B cell (primary cell): ENCODE measurements at regions of chr13 and their contacts with region 1.

Region 1: GRCh38 chr13:99442273-99442895 is 58.9 kb upstream of the TM9SF2 start:
- DNase-seq: peak; percentile 76
- ATAC-seq: peak; percentile 80
- H3K4me3 ChIP-seq: no peak overlapping the region
- H3K4me3 Mint-ChIP-seq: no peak overlapping the region
- H3K27ac ChIP-seq: no peak overlapping the region
- H3K27ac Mint-ChIP-seq: no peak overlapping the region
- H3K4me1 ChIP-seq: peaks cover 14 to 17% of the 10 kb centered on the region in 2 donors
- H3K4me1 Mint-ChIP-seq: peaks cover 15% of the 10 kb centered on the region
- H3K27me3 ChIP-seq: no peaks in the 10 kb centered on the region
- H3K27me3 Mint-ChIP-seq: no peaks in the 10 kb centered on the region
- CTCF ChIP-seq: peak; percentile 99

Region 2: DNA sequence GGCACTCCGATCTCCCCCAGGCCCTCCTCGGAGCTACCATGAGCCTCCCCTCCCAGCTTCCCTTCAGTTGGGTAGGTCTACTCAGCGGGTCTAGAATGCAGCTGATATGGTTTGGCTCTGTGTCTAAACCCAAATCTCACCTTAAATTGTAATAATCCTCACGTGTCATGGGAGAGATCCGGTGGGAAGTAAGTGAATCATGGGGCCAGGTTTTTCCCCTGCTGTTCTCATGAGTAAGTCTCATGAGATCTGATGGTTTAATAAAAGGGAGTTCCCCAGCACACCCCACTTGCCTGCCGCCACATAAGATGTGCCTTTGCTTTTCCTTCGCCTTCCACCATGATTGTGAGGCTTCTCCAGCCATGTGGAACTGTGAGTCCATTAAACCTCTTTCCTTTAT is 450.0 kb before region 1 on chr13:
- CTCF ChIA-PET with region 1: no interaction called
- POLR2A ChIA-PET with region 1: no interaction called
- intact Hi-C with region 1: no loop called
- DNase-seq: no peak
- ATAC-seq: no peak
- H3K4me3 ChIP-seq: no peak overlapping the region
- H3K4me3 Mint-ChIP-seq: no peak overlapping the region
- H3K27ac ChIP-seq: no peak overlapping the region
- H3K27ac Mint-ChIP-seq: no peak overlapping the region
- H3K4me1 ChIP-seq: no peaks in the 10 kb centered on the region
- H3K4me1 Mint-ChIP-seq: no peaks in the 10 kb centered on the region
- H3K27me3 ChIP-seq: no peaks in the 10 kb centered on the region
- H3K27me3 Mint-ChIP-seq: no peaks in the 10 kb centered on the region
- CTCF ChIP-seq: no peak

Region 3: DNA sequence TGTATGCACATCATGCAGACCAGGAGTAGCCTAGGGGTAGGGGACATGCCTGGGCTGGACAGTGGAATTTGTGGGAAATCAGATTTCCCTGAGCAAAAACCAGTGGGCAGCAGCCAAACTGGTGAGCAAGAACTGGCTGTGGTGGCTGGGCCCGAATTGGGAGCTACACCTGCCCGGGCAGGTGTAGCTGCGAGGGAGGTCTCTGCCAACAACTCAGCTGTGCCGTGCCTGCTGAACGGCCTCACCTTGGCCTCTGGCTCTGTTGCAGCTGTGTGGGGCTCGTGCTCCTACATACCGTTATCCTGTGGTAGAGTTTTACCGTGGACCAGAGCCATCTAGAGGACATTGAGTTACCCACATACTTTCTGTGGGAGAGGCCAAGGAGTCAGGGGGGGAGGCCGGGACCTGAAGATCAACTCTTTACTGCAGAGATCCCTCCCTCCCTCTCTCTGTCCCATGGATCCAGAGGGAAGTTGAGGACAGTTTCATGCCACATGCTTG is 172.1 kb after region 1 on chr13:
- CTCF ChIA-PET with region 1: interaction called, 9 read pairs
- POLR2A ChIA-PET with region 1: no interaction called
- intact Hi-C with region 1: loop called (anchors 1 kb)
- DNase-seq: peak; percentile 62
- ATAC-seq: peak; percentile 98
- H3K4me3 ChIP-seq: no peak overlapping the region
- H3K4me3 Mint-ChIP-seq: no peak overlapping the region
- H3K27ac ChIP-seq: no peak overlapping the region
- H3K27ac Mint-ChIP-seq: no peak overlapping the region
- H3K4me1 ChIP-seq: peaks cover 4 to 8% of the 10 kb centered on the region in 2 donors
- H3K4me1 Mint-ChIP-seq: peaks cover 26% of the 10 kb centered on the region
- H3K27me3 ChIP-seq: no peaks in the 10 kb centered on the region
- H3K27me3 Mint-ChIP-seq: no peaks in the 10 kb centered on the region
- CTCF ChIP-seq: peak; percentile 19

Region 4: GRCh38 chr13:99916366-99917103 is 474.2 kb after region 1 on chr13:
- CTCF ChIA-PET with region 1: no interaction called
- POLR2A ChIA-PET with region 1: no interaction called
- intact Hi-C with region 1: loop called (anchors 5 kb)
- DNase-seq: peak; percentile 57
- ATAC-seq: peak; percentile 58
- H3K4me3 ChIP-seq: no peak overlapping the region
- H3K4me3 Mint-ChIP-seq: no peak overlapping the region
- H3K27ac ChIP-seq: no peak overlapping the region
- H3K27ac Mint-ChIP-seq: no peak overlapping the region
- H3K4me1 ChIP-seq: no peaks in the 10 kb centered on the region
- H3K4me1 Mint-ChIP-seq: no peaks in the 10 kb centered on the region
- H3K27me3 ChIP-seq: peaks cover 0 to 18% (median 9%) of the 10 kb centered on the region in 4 experiments
- H3K27me3 Mint-ChIP-seq: peaks cover 14% of the 10 kb centered on the region
- CTCF ChIP-seq: peak; percentile 78

Region 5: GRCh38 chr13:99969919-99970621 is 527.7 kb after region 1 on chr13:
- CTCF ChIA-PET with region 1: no interaction called
- POLR2A ChIA-PET with region 1: no interaction called
- intact Hi-C with region 1: loop called (anchors 10 kb)
- DNase-seq: peak; percentile 65
- ATAC-seq: peak; percentile 41
- H3K4me3 ChIP-seq: peak overlapping the region in 3 of 5 experiments; percentile 34 to 53 (median 46)
- H3K4me3 Mint-ChIP-seq: peak overlapping the region; percentile 83
- H3K27ac ChIP-seq: no peak overlapping the region
- H3K27ac Mint-ChIP-seq: peak overlapping the region; percentile 71
- H3K4me1 ChIP-seq: peaks cover 29 to 53% of the 10 kb centered on the region in 2 donors
- H3K4me1 Mint-ChIP-seq: peaks cover 20% of the 10 kb centered on the region
- H3K27me3 ChIP-seq: peaks cover 0 to 84% (median 75%) of the 10 kb centered on the region in 4 experiments
- H3K27me3 Mint-ChIP-seq: peaks cover 66% of the 10 kb centered on the region
- CTCF ChIP-seq: no peak